Heart right ventricle (tissue), 16 donors: ENCODE measurements at regions of chr17 and their contacts with region 1.

Region 1: GRCh38 chr17:68435876-68436842 is 21.1 kb downstream of the WIPI1 start:
- DNase-seq: peak; percentile 58 to 83
- ATAC-seq: peak; percentile 43 to 77 (median 66)
- H3K4me3 ChIP-seq: no peak overlapping the region
- H3K27ac ChIP-seq: peak overlapping the region in 7 of 10 donors; percentile 35 to 90 (median 72)
- H3K4me1 ChIP-seq: peaks cover 3 to 80% (median 59%) of the 10 kb centered on the region in 9 donors
- H3K27me3 ChIP-seq: no peaks in the 10 kb centered on the region
- CTCF ChIP-seq: peak; percentile 84 to 95 (median 88)

Region 2: DNA sequence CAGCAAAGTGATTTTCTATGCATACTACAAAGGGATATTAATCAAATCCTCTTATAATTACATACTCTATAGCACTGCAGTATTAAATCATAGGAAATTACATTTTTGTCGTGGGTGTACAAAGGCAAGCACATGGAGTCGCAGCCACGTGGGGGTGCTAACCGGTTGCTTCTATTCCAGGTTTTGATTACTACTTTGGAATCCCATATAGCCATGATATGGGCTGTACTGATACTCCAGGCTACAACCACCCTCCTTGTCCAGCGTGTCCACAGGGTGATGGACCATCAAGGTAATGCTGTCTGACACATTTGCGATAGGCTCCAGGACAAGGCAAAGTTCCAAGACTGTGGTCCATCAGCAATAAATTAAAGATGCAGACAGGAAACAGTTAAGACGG is 84.8 kb before region 1 on chr17:
- intact Hi-C with region 1: loop called in 2 of 10 experiments (anchors 5 to 10 kb)
- DNase-seq: peak in 1 of 2 donors; percentile 24
- ATAC-seq: peak in 3 of 8 donors; percentile 34 to 63 (median 42)
- H3K4me3 ChIP-seq: no peak overlapping the region
- H3K27ac ChIP-seq: no peak overlapping the region
- H3K4me1 ChIP-seq: peaks cover 0 to 76% (median 0%) of the 10 kb centered on the region in 9 donors
- H3K27me3 ChIP-seq: no peaks in the 10 kb centered on the region
- CTCF ChIP-seq: peak in 7 of 9 donors; percentile 16 to 58 (median 38)

Region 3: DNA sequence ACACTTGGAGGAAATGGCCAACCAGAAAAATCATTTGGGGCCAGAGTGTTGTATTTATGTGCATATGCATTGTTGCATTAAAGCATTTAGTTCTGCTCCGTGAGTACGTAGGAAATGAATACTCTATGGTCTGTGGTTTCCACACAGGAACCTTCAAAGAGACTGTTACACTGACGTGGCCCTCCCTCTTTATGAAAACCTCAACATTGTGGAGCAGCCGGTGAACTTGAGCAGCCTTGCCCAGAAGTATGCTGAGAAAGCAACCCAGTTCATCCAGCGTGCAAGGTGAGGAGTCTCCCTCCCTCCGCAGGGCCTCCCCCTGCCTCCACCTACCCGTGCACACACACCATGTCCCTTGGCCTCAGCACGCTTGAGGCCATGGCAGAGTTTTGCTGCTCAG is 79.6 kb before region 1 on chr17:
- intact Hi-C with region 1: loop called in 2 of 10 experiments (anchors 5 to 10 kb)
- DNase-seq: no peak
- ATAC-seq: peak in 3 of 8 donors; percentile 27 to 39 (median 38)
- H3K4me3 ChIP-seq: no peak overlapping the region
- H3K27ac ChIP-seq: peak overlapping the region in 1 of 10 donors; percentile 58
- H3K4me1 ChIP-seq: peaks cover 0 to 61% (median 0%) of the 10 kb centered on the region in 9 donors
- H3K27me3 ChIP-seq: no peaks in the 10 kb centered on the region
- CTCF ChIP-seq: no peak

Region 4: DNA sequence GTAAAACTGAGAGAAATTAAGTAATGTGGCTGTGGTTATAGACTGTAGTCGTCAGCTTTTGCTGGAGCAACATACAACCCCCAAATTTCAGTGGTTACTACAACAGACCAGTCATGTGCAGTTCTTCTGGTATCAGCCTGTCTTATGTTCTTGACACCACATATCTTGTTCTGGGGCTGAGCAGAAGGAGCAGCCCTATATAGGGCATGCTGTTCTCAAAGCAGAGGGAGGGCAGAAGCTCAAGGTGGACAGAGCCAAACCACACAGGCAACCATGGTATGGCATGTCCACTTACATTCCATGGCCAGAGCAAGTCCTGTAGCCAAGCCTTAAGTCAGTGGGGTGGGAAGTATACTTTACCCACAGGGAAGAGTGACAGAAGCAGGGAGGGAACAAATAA is 83.8 kb after region 1 on chr17:
- intact Hi-C with region 1: no loop called
- DNase-seq: peak in 1 of 2 donors; percentile 41
- ATAC-seq: peak; percentile 62 to 93 (median 82)
- H3K4me3 ChIP-seq: no peak overlapping the region
- H3K27ac ChIP-seq: peak overlapping the region; percentile 12 to 72 (median 57)
- H3K4me1 ChIP-seq: peaks cover 0 to 99% (median 68%) of the 10 kb centered on the region in 9 donors
- H3K27me3 ChIP-seq: no peaks in the 10 kb centered on the region
- CTCF ChIP-seq: no peak